Dorsolateral prefrontal cortex (tissue), 120 donors: ENCODE measurements at regions of chr4 and their contacts with region 1.

Region 1: DNA sequence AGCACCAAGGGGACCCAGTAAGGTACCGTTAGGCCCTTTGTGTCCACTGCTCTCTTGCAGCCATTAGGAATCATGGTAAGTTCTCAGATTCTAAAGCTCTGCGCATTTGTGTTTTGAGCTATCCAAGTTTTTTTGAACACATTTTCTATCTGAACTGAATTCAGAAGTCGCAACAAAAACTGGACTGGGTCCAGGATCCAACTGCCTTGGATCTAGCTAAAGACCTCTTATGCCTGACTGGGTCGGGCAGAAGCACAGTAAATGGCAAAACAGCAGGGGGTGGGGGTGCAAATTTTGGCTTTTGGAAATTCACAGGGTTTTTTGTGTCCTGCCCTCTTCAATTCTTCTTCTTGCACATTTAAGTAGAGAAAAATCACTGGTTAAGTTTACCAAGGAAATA is 30.0 kb downstream of the RCHY1 start:
- DNase-seq: peak in 1 of 10 donors; percentile 51
- H3K4me3 ChIP-seq: no peak overlapping the region
- H3K27ac ChIP-seq: peak overlapping the region in 10 of 59 donors; percentile 2 to 53 (median 20)
- H3K27me3 ChIP-seq: no peaks in the 10 kb centered on the region
- CTCF ChIP-seq: no peak

Region 2: DNA sequence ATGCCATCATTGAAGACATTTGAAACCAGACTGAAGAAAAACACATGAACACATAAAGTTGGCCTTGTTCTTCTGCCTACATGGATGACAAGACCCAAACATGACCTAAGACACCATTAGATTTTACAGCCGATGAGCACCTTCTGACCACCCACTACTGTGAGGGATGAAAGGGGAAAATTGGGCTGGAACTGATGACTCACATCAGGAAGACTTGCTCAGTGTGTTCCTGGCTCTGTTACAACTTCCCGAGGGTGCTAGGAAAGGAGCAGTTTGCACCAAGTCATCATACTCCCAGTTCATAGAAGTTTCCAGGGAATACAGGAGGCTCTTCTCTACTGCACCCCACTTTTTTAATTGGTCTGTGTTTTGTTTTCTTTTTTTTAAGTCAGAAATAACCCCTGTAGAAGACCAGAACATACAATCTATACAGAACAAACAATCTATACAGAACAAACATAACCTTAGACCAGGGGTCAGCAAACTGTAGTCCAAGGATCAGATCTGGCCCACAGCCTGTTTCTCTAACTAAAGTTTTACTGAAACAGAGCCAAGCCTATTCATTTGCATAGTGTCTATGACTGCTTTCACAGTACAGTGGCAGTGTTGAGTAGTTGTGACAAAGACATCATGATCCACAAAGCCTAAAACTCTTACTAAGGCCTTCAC is 715.2 kb before region 1 on chr4:
- intact Hi-C with region 1: no loop called
- DNase-seq: no peak
- H3K4me3 ChIP-seq: no peak overlapping the region
- H3K27ac ChIP-seq: peak overlapping the region in 1 of 59 donors; percentile 0
- H3K27me3 ChIP-seq: no peaks in the 10 kb centered on the region
- CTCF ChIP-seq: no peak

Region 3: GRCh38 chr4:74874753-74875367 is 609.3 kb before region 1 on chr4:
- intact Hi-C with region 1: loop called in 1 of 2 experiments (anchors 10 kb)
- DNase-seq: peak in 4 of 10 donors; percentile 7 to 58 (median 29)
- H3K4me3 ChIP-seq: no peak overlapping the region
- H3K27ac ChIP-seq: peak overlapping the region in 3 of 59 donors; percentile 1 to 43 (median 42)
- H3K27me3 ChIP-seq: no peaks in the 10 kb centered on the region
- CTCF ChIP-seq: peak; percentile 85 to 99 (median 96)

Region 4: GRCh38 chr4:75817901-75818300 is 333.7 kb after region 1 on chr4:
- intact Hi-C with region 1: no loop called
- DNase-seq: no peak
- H3K4me3 ChIP-seq: no peak overlapping the region
- H3K27ac ChIP-seq: no peak overlapping the region
- H3K27me3 ChIP-seq: no peaks in the 10 kb centered on the region
- CTCF ChIP-seq: no peak